ENCODE measurements at regions of chr6 and their contacts with region 1.

Region 1: GRCh38 chr6:133568970-133569889 is 319.7 kb upstream of the TCF21 start:
- DNase-seq: peak; percentile 90
- ATAC-seq: peak; percentile 93
- H3K4me3 ChIP-seq: peak overlapping the region; percentile 74
- H3K27ac ChIP-seq: peak overlapping the region; percentile 95
- H3K4me1 ChIP-seq: peaks cover 30% of the 10 kb centered on the region
- H3K27me3 ChIP-seq: no peaks in the 10 kb centered on the region
- CTCF ChIP-seq: peak; percentile 85

Region 2: DNA sequence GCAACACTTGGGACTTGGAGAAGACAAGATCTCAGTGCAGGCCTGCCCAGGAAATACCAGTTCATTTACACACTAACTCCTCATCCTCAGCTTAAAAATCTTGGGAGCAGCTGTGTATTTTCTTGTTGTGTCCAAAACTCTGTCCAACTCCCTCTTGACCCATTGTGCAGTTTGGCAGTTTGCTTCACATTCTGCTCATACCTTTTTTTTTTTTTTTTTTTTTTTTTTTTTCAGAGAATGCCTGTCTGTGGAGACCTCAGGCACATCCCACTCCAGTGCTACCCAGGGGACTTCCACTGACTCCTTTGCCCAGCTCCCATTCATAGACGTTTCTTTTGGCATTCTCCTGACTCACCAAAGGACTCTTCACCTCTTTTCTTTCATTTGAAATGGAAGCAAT is 53.8 kb after region 1 on chr6:
- CTCF ChIA-PET with region 1: interaction called, 4 read pairs
- POLR2A ChIA-PET with region 1: no interaction called
- intact Hi-C with region 1: loop called (anchors 5 kb)
- DNase-seq: no peak
- ATAC-seq: 0 out of 2 replicates have a peak, but pooled peaks have one; percentile 27
- H3K4me3 ChIP-seq: no peak overlapping the region
- H3K27ac ChIP-seq: peak overlapping the region; percentile 80
- H3K4me1 ChIP-seq: peaks cover 23% of the 10 kb centered on the region
- H3K27me3 ChIP-seq: no peaks in the 10 kb centered on the region
- CTCF ChIP-seq: no peak

Region 3: GRCh38 chr6:133644892-133645619 is 75.8 kb after region 1 on chr6:
- CTCF ChIA-PET with region 1: interaction called, 16 read pairs
- POLR2A ChIA-PET with region 1: no interaction called
- intact Hi-C with region 1: no loop called
- DNase-seq: no peak
- ATAC-seq: no peak
- H3K4me3 ChIP-seq: no peak overlapping the region
- H3K27ac ChIP-seq: no peak overlapping the region
- H3K4me1 ChIP-seq: peaks cover 17% of the 10 kb centered on the region
- H3K27me3 ChIP-seq: no peaks in the 10 kb centered on the region
- CTCF ChIP-seq: no peak

Region 4: GRCh38 chr6:133707456-133707855 is 138.2 kb after region 1 on chr6:
- CTCF ChIA-PET with region 1: no interaction called
- POLR2A ChIA-PET with region 1: no interaction called
- intact Hi-C with region 1: loop called (anchors 5 kb)
- DNase-seq: no peak
- ATAC-seq: no peak
- H3K4me3 ChIP-seq: no peak overlapping the region
- H3K27ac ChIP-seq: no peak overlapping the region
- H3K4me1 ChIP-seq: peaks cover 20% of the 10 kb centered on the region
- H3K27me3 ChIP-seq: no peaks in the 10 kb centered on the region
- CTCF ChIP-seq: no peak

Region 5: GRCh38 chr6:133837801-133838349 is 268.6 kb after region 1 on chr6:
- CTCF ChIA-PET with region 1: interaction called, 10 read pairs
- POLR2A ChIA-PET with region 1: no interaction called
- intact Hi-C with region 1: loop called (anchors 1 kb)
- DNase-seq: peak; percentile 77
- ATAC-seq: peak; percentile 94
- H3K4me3 ChIP-seq: peak overlapping the region; percentile 81
- H3K27ac ChIP-seq: peak overlapping the region; percentile 70
- H3K4me1 ChIP-seq: no peaks in the 10 kb centered on the region
- H3K27me3 ChIP-seq: no peaks in the 10 kb centered on the region
- CTCF ChIP-seq: peak; percentile 94

Region 6: GRCh38 chr6:133916650-133917151 is 347.5 kb after region 1 on chr6:
- CTCF ChIA-PET with region 1: interaction called, 12 read pairs
- POLR2A ChIA-PET with region 1: no interaction called
- intact Hi-C with region 1: loop called (anchors 1 kb)
- DNase-seq: peak; percentile 86
- ATAC-seq: peak; percentile 82
- H3K4me3 ChIP-seq: 0 out of 2 replicates have a peak overlapping the region, but pooled peaks have one; percentile 39
- H3K27ac ChIP-seq: no peak overlapping the region
- H3K4me1 ChIP-seq: no peaks in the 10 kb centered on the region; the same call in 1 of the 2 replicates
- H3K27me3 ChIP-seq: no peaks in the 10 kb centered on the region
- CTCF ChIP-seq: peak; percentile 89

Region 7: GRCh38 chr6:134097114-134097707 is 528.0 kb after region 1 on chr6:
- CTCF ChIA-PET with region 1: interaction called, 4 read pairs
- POLR2A ChIA-PET with region 1: no interaction called
- intact Hi-C with region 1: loop called (anchors 2 kb)
- DNase-seq: peak; percentile 78
- ATAC-seq: peak; percentile 50; the same call in 1 of the 2 replicates
- H3K4me3 ChIP-seq: no peak overlapping the region
- H3K27ac ChIP-seq: no peak overlapping the region
- H3K4me1 ChIP-seq: peaks cover 4% of the 10 kb centered on the region; the same call in 1 of the 2 replicates
- H3K27me3 ChIP-seq: no peaks in the 10 kb centered on the region
- CTCF ChIP-seq: peak; percentile 74

Measured in PC-3 (cell line).